Caco-2 (cell line): ENCODE measurements at regions of chr6 and their contacts with region 1.

Region 1: GRCh38 chr6:35960187-35960586 is 39.3 kb upstream of the SRPK1 start:
- DNase-seq: no peak
- H3K4me3 ChIP-seq: no peak overlapping the region
- H3K4me3 Mint-ChIP-seq: no peak overlapping the region
- H3K27ac Mint-ChIP-seq: no peak overlapping the region
- H3K4me1 ChIP-seq: peaks cover 49% of the 10 kb centered on the region
- H3K4me1 Mint-ChIP-seq: peaks cover 33% of the 10 kb centered on the region
- H3K27me3 ChIP-seq: no peaks in the 10 kb centered on the region
- H3K27me3 Mint-ChIP-seq: no peaks in the 10 kb centered on the region
- CTCF ChIP-seq: no peak

Region 2: GRCh38 chr6:35920793-35921732 is 39.1 kb before region 1 on chr6 and contains the start of gene SRPK1:
- CTCF ChIA-PET with region 1: no interaction called
- POLR2A ChIA-PET with region 1: interaction called, 7 read pairs
- intact Hi-C with region 1: loop called (anchors 2 kb)
- DNase-seq: peak; percentile 94
- H3K4me3 ChIP-seq: peak within 1 kb of the TSS; percentile 69
- H3K4me3 Mint-ChIP-seq: peak within 1 kb of the TSS; percentile 97
- H3K27ac Mint-ChIP-seq: peak within 1 kb of the TSS; percentile 97
- H3K4me1 ChIP-seq: peaks cover 20% of the 10 kb centered on the region
- H3K4me1 Mint-ChIP-seq: peaks cover 34% of the 10 kb centered on the region
- H3K27me3 ChIP-seq: no peaks in the 10 kb centered on the region
- H3K27me3 Mint-ChIP-seq: no peaks in the 10 kb centered on the region
- CTCF ChIP-seq: no peak
- total RNA-seq, gene SRPK1: 114 and 124 TPM in 2 replicates

Region 3: GRCh38 chr6:35973670-35974222 is 13.6 kb after region 1 on chr6:
- CTCF ChIA-PET with region 1: no interaction called
- POLR2A ChIA-PET with region 1: no interaction called
- intact Hi-C with region 1: no loop called
- DNase-seq: peak; percentile 13 to 64
- H3K4me3 ChIP-seq: no peak overlapping the region
- H3K4me3 Mint-ChIP-seq: no peak overlapping the region
- H3K27ac Mint-ChIP-seq: no peak overlapping the region
- H3K4me1 ChIP-seq: peaks cover 22% of the 10 kb centered on the region
- H3K4me1 Mint-ChIP-seq: peaks cover 21% of the 10 kb centered on the region
- H3K27me3 ChIP-seq: no peaks in the 10 kb centered on the region
- H3K27me3 Mint-ChIP-seq: no peaks in the 10 kb centered on the region
- CTCF ChIP-seq: no peak